Activated CD4-positive, alpha-beta T cell treated with anti-CD3 and anti-CD28 coated beads for 36 hours (primary cell): ENCODE measurements at regions of chr14 and their contacts with region 1.

Region 1: GRCh38 chr14:101964297-101965144 is at the start of gene DYNC1H1:
- DNase-seq: peak; percentile 93
- ATAC-seq: peak; percentile 82
- H3K4me3 Mint-ChIP-seq: peak within 1 kb of the TSS; percentile 89
- H3K27ac Mint-ChIP-seq: peak within 1 kb of the TSS; percentile 91
- H3K4me1 Mint-ChIP-seq: peaks cover 39% of the 10 kb centered on the region
- H3K27me3 Mint-ChIP-seq: no peaks in the 10 kb centered on the region
- total RNA-seq, gene DYNC1H1: 283 to 293 TPM

Region 2: GRCh38 chr14:101761032-101761880 is 203.3 kb before region 1 on chr14 and contains the start of gene PPP2R5C:
- CTCF ChIA-PET with region 1: no interaction called
- POLR2A ChIA-PET with region 1: no interaction called
- intact Hi-C with region 1: loop called in 1 of 2 experiments (anchors 1 kb)
- DNase-seq: peak; percentile 94
- ATAC-seq: peak; percentile 65
- H3K4me3 Mint-ChIP-seq: peak within 1 kb of the TSS; percentile 85
- H3K27ac Mint-ChIP-seq: peak within 1 kb of the TSS; percentile 78
- H3K4me1 Mint-ChIP-seq: peaks cover 43% of the 10 kb centered on the region
- H3K27me3 Mint-ChIP-seq: no peaks in the 10 kb centered on the region
- total RNA-seq, gene PPP2R5C: 232 to 281 TPM

Region 3: GRCh38 chr14:102020058-102020971 is 55.8 kb after region 1 on chr14:
- CTCF ChIA-PET with region 1: interaction called, 6 read pairs
- POLR2A ChIA-PET with region 1: no interaction called
- intact Hi-C with region 1: loop called (anchors 1 to 2 kb)
- DNase-seq: peak; percentile 79
- ATAC-seq: peak; percentile 89
- H3K4me3 Mint-ChIP-seq: peak overlapping the region; percentile 13
- H3K27ac Mint-ChIP-seq: peak overlapping the region; percentile 88
- H3K4me1 Mint-ChIP-seq: peaks cover 20% of the 10 kb centered on the region
- H3K27me3 Mint-ChIP-seq: no peaks in the 10 kb centered on the region

Region 4: GRCh38 chr14:102057480-102058114 is 93.1 kb after region 1 on chr14:
- CTCF ChIA-PET with region 1: no interaction called
- POLR2A ChIA-PET with region 1: no interaction called
- intact Hi-C with region 1: no loop called
- DNase-seq: no peak
- ATAC-seq: no peak
- H3K4me3 Mint-ChIP-seq: no peak overlapping the region
- H3K27ac Mint-ChIP-seq: no peak overlapping the region
- H3K4me1 Mint-ChIP-seq: no peaks in the 10 kb centered on the region
- H3K27me3 Mint-ChIP-seq: no peaks in the 10 kb centered on the region

Region 5: DNA sequence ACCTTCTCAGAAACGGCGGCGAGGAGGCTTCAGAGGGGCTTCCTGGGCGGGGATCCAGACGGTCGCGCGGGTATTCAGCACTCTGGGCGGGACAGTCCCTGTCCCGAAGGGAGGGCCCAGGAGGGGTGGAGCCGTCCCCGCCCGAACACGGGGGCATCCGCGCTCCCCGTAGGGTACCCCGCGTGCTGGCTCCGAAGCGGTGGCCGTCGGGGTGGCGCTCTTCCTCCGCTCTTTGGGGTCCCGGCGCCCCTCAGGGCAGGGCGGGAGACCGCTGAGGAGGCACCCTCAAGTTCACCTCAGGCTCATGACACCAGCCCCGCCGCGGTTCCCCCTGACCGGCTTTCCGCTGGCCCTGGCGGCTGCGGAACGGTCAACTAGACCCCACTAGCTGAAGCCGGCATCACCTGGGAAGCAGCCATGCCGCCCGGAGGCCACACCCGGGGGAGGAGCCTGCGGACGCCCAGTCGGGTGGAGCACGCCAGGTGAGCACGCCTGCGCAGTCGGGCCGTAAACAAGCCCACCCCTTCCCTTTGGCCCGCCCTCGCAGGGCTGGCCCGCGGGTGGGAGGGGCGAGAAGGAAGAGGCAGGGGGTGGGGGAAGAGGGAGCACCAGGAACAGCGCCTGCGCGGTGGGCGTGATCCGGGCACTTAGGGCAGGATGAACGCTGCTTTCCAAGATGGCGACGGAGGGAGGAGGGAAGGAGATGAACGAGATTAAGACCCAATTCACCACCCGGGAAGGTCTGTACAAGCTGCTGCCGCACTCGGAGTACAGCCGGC is 174.9 kb after region 1 on chr14 and contains the start of gene WDR20:
- CTCF ChIA-PET with region 1: interaction called, 3 read pairs
- POLR2A ChIA-PET with region 1: no interaction called
- intact Hi-C with region 1: loop called (anchors 1 kb)
- DNase-seq: peak; percentile 100
- ATAC-seq: peak; percentile 94
- H3K4me3 Mint-ChIP-seq: peak within 1 kb of the TSS; percentile 96
- H3K27ac Mint-ChIP-seq: peak within 1 kb of the TSS; percentile 94
- H3K4me1 Mint-ChIP-seq: peaks cover 21% of the 10 kb centered on the region
- H3K27me3 Mint-ChIP-seq: no peaks in the 10 kb centered on the region
- total RNA-seq, gene WDR20: 18.2 to 24.8 TPM

Region 6: GRCh38 chr14:102509744-102510615 is 545.5 kb after region 1 on chr14 and contains the start of gene ANKRD9:
- CTCF ChIA-PET with region 1: interaction called, 3 read pairs
- POLR2A ChIA-PET with region 1: no interaction called
- intact Hi-C with region 1: loop called (anchors 5 to 10 kb)
- DNase-seq: peak; percentile 95
- ATAC-seq: peak; percentile 89
- H3K4me3 Mint-ChIP-seq: peak within 1 kb of the TSS; percentile 75
- H3K27ac Mint-ChIP-seq: peak within 1 kb of the TSS; percentile 51
- H3K4me1 Mint-ChIP-seq: peaks cover 16% of the 10 kb centered on the region
- H3K27me3 Mint-ChIP-seq: peaks cover 2% of the 10 kb centered on the region
- total RNA-seq, gene ANKRD9: 4.8 to 9.3 TPM